H1 (cell line): ENCODE measurements at regions of chr1 and their contacts with region 1.

Region 1: GRCh38 chr1:93814059-93814794 is 64.8 kb downstream of the DNTTIP2 start:
- DNase-seq: peak in 1 of 2 experiments; percentile 67
- H3K4me3 ChIP-seq: no peak overlapping the region
- H3K27ac ChIP-seq: no peak overlapping the region
- H3K4me1 ChIP-seq: peaks cover 6 to 17% (median 7%) of the 10 kb centered on the region in 4 experiments; a peak in 6 of 7 replicates
- H3K27me3 ChIP-seq: no peaks in the 10 kb centered on the region
- CTCF ChIP-seq: peak in 2 of 3 experiments; percentile 97 to 99; a peak in 3 of 4 replicates
- EP300 ChIP-seq: no peak
- POLR2A ChIP-seq: no peak
- RAD21 ChIP-seq: peak; percentile 100

Region 2: GRCh38 chr1:93666613-93667384 is 147.4 kb before region 1 on chr1:
- CTCF ChIA-PET with region 1: interaction called, 39 read pairs
- POLR2A ChIA-PET with region 1: interaction called, 3 read pairs
- DNase-seq: no peak
- H3K4me3 ChIP-seq: no peak overlapping the region
- H3K27ac ChIP-seq: no peak overlapping the region
- H3K4me1 ChIP-seq: peaks cover 6 to 26% (median 16%) of the 10 kb centered on the region in 4 experiments
- H3K27me3 ChIP-seq: no peaks in the 10 kb centered on the region
- CTCF ChIP-seq: no peak
- EP300 ChIP-seq: no peak
- POLR2A ChIP-seq: no peak
- RAD21 ChIP-seq: no peak

Region 3: DNA sequence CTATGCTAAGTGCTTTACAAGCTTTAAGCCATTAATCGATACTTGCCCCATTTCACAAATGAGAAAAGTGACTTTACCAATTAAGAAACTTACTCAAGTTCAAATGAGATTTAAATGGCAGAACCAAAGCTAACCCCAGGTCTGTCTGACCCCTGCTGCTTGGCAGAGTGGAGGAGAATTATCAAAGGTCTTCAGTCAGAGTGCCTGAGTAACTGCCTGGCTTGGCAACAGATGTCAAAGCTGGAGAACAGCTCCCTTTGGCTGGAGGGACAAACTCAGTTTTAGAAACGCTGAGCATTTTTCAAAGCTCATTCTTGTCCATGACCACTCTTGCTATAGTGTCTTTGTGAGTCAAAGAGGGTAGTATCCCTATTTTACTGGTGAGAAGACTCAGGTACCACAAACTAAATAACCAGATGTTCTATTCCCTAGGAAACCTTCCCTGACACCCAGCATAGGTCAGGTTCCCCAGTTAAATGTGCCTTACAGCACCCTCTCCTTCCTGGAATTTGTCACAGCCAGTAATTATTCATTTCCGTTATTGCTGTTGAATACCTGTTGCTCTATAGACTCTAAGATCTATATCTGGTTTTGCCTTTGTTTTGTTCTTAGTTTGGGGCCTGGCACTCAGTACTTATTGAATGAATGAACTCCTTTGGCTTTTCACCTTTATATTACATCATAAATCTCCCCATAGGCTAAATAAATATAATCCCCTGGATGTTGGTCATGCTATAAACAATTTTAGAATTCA is 127.6 kb before region 1 on chr1:
- CTCF ChIA-PET with region 1: interaction called, 23 read pairs
- POLR2A ChIA-PET with region 1: interaction called, 3 read pairs
- DNase-seq: no peak
- H3K4me3 ChIP-seq: no peak overlapping the region
- H3K27ac ChIP-seq: no peak overlapping the region
- H3K4me1 ChIP-seq: peaks cover 0 to 6% (median 2%) of the 10 kb centered on the region in 4 experiments; a peak in 5 of 7 replicates
- H3K27me3 ChIP-seq: peaks cover 0 to 8% (median 2%) of the 10 kb centered on the region in 4 experiments; a peak in 3 of 7 replicates
- CTCF ChIP-seq: no peak
- EP300 ChIP-seq: no peak
- POLR2A ChIP-seq: no peak
- RAD21 ChIP-seq: no peak

Region 4: DNA sequence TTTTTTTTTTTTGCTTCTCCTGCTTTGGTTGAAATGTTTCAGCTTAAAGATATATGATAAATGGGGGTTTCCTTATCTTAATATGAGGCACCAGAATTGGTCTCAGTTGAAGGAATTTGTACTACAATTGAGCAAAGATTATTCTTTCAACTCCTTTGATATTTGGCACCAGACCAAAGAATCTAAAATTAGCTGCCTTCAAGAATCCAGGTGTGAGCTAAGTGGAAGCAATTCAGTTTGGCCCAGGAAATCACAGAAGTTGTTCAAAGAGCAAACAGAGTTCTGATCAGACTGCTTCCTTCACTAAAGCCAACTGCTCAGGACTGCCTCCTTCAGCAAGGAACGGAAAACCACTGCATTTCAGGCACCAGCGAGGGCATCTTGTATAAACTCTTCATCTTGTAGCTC is 64.3 kb before region 1 on chr1:
- CTCF ChIA-PET with region 1: interaction called, 11 read pairs
- POLR2A ChIA-PET with region 1: no interaction called
- DNase-seq: peak in 1 of 2 experiments; percentile 25
- H3K4me3 ChIP-seq: no peak overlapping the region
- H3K27ac ChIP-seq: no peak overlapping the region
- H3K4me1 ChIP-seq: no peaks in the 10 kb centered on the region
- H3K27me3 ChIP-seq: no peaks in the 10 kb centered on the region; a peak in 1 of 7 replicates
- CTCF ChIP-seq: peak; percentile 41 to 73 (median 56)
- EP300 ChIP-seq: no peak
- POLR2A ChIP-seq: no peak
- RAD21 ChIP-seq: peak; percentile 43 to 66; a peak in 3 of 4 replicates

Region 5: DNA sequence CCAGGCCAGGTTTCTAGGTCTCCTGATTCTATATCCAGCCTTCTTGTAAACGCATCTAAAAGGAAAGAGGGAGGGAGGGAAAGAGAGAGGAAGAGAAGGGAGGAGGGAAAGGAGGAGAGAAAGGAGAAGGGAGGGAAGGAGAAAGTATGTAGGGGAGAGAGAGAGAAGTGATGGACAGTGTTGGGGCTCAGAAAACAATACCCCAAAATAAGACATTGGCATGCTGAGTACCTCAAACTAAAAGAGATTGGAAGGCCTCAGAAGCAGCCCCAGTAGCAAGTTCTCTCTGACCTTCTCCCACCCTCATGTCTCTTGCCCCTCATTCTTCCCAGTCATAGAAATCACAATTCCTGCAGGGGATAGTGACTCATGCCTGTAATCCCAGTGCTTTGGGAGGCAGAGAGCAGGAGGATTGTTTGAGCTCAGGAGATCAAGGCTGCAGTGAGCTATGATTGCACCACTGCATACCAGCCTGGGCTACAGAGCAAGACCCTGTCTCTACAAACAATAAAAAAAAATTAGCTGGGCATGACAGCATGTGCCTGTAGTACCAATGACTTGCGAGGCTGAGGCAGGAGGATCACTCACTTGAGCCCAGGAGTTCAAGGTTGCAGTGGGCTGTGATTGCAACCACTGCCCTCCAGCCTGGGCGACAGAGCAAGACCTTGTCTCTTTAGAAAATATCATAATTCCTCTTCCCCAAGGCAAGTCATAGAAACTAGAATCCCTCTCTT is 13.6 kb after region 1 on chr1:
- CTCF ChIA-PET with region 1: interaction called, 100 read pairs
- POLR2A ChIA-PET with region 1: interaction called, 4 read pairs
- DNase-seq: no peak
- H3K4me3 ChIP-seq: no peak overlapping the region
- H3K27ac ChIP-seq: no peak overlapping the region
- H3K4me1 ChIP-seq: peaks cover 2 to 10% (median 6%) of the 10 kb centered on the region in 4 experiments; a peak in 4 of 7 replicates
- H3K27me3 ChIP-seq: no peaks in the 10 kb centered on the region
- CTCF ChIP-seq: no peak
- EP300 ChIP-seq: no peak
- POLR2A ChIP-seq: no peak
- RAD21 ChIP-seq: no peak